H1 (cell line): ENCODE measurements at regions of chrX and their contacts with region 1.

Region 1: GRCh38 chrX:19334945-19335626 is 8.6 kb upstream of the PDHA1 start:
- DNase-seq: no peak
- H3K4me3 ChIP-seq: no peak overlapping the region
- H3K27ac ChIP-seq: no peak overlapping the region
- H3K4me1 ChIP-seq: no peaks in the 10 kb centered on the region
- H3K27me3 ChIP-seq: no peaks in the 10 kb centered on the region
- CTCF ChIP-seq: peak in 2 of 3 experiments; percentile 78 to 98; a peak in 3 of 4 replicates
- EP300 ChIP-seq: no peak
- POLR2A ChIP-seq: no peak
- RAD21 ChIP-seq: peak; percentile 72 to 73

Region 2: DNA sequence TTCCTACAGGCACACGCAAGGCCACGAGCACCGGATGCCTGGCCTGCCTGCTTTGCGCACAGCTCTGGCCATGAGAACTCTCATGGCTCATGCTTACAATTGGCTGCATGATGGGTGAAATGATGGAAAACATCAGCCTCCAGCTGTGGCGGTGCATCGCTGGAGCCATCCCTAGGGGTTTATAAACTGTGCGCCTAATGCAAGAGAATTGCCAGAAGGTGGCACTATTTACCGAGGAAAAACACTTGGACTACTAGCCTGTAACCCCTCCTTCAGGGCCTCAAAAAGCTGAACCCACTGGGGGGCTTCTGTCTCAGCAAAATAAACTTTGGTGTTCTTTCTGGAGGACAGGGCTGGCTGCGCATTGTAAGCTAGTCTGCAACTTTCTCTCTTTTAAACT is 403.1 kb before region 1 on chrX:
- CTCF ChIA-PET with region 1: interaction called, 11 read pairs
- POLR2A ChIA-PET with region 1: no interaction called
- DNase-seq: no peak
- H3K4me3 ChIP-seq: no peak overlapping the region
- H3K27ac ChIP-seq: no peak overlapping the region
- H3K4me1 ChIP-seq: no peaks in the 10 kb centered on the region
- H3K27me3 ChIP-seq: no peaks in the 10 kb centered on the region
- CTCF ChIP-seq: peak in 2 of 3 experiments; percentile 57 to 63; a peak in 3 of 4 replicates
- EP300 ChIP-seq: no peak
- POLR2A ChIP-seq: no peak
- RAD21 ChIP-seq: peak; percentile 63 to 75

Region 3: DNA sequence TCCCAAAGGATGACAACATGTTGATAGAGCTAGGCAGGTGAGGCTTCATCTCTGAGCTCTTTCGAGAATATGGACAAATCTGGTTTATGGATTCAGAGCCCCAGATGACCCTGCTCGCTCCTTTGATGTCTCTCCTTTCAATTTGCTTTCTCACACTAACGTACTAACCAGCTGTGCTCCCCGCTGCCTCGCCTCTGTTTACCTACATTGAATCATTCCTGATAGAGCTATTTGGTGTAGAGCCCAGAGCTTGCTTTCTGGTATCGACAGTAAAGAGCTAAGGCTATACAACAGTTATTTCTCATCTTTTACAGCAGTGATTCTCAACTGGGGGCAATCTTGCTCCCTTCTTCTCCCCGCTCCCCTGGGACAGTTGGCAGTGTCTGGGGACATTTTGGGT is 342.3 kb before region 1 on chrX:
- CTCF ChIA-PET with region 1: interaction called, 12 read pairs
- POLR2A ChIA-PET with region 1: no interaction called
- DNase-seq: no peak
- H3K4me3 ChIP-seq: no peak overlapping the region
- H3K27ac ChIP-seq: no peak overlapping the region
- H3K4me1 ChIP-seq: peaks cover 0 to 3% (median 0%) of the 10 kb centered on the region in 4 experiments; a peak in 1 of 7 replicates
- H3K27me3 ChIP-seq: no peaks in the 10 kb centered on the region
- CTCF ChIP-seq: no peak
- EP300 ChIP-seq: no peak
- POLR2A ChIP-seq: no peak
- RAD21 ChIP-seq: no peak

Region 4: GRCh38 chrX:19017271-19017670 is 317.8 kb before region 1 on chrX:
- CTCF ChIA-PET with region 1: interaction called, 67 read pairs
- POLR2A ChIA-PET with region 1: interaction called, 4 read pairs
- DNase-seq: no peak
- H3K4me3 ChIP-seq: no peak overlapping the region
- H3K27ac ChIP-seq: no peak overlapping the region
- H3K4me1 ChIP-seq: no peaks in the 10 kb centered on the region
- H3K27me3 ChIP-seq: no peaks in the 10 kb centered on the region
- CTCF ChIP-seq: peak; percentile 34 to 79 (median 72)
- EP300 ChIP-seq: no peak
- POLR2A ChIP-seq: no peak
- RAD21 ChIP-seq: peak; percentile 80 to 83

Region 5: DNA sequence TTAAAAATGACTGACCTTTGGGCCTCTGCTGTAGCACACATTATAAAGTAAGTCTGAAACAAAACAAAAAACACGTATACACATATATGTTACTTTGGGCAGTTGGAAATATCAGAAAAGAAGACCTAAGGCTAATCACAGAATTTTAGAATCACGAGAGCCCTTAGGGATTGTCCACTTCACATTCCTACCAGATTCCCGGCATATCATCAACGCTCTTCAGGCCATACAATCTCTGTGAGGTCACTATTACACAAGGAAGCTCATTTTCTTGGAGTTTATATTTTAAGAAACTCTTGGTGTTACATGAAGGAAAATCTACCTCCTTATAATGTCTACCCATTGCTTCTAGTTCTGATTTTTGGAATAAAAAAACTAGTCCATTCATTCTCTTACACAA is 311.7 kb before region 1 on chrX:
- CTCF ChIA-PET with region 1: interaction called, 67 read pairs
- POLR2A ChIA-PET with region 1: no interaction called
- DNase-seq: no peak
- H3K4me3 ChIP-seq: no peak overlapping the region
- H3K27ac ChIP-seq: no peak overlapping the region
- H3K4me1 ChIP-seq: no peaks in the 10 kb centered on the region
- H3K27me3 ChIP-seq: no peaks in the 10 kb centered on the region
- CTCF ChIP-seq: no peak
- EP300 ChIP-seq: no peak
- POLR2A ChIP-seq: no peak
- RAD21 ChIP-seq: no peak

Region 6: DNA sequence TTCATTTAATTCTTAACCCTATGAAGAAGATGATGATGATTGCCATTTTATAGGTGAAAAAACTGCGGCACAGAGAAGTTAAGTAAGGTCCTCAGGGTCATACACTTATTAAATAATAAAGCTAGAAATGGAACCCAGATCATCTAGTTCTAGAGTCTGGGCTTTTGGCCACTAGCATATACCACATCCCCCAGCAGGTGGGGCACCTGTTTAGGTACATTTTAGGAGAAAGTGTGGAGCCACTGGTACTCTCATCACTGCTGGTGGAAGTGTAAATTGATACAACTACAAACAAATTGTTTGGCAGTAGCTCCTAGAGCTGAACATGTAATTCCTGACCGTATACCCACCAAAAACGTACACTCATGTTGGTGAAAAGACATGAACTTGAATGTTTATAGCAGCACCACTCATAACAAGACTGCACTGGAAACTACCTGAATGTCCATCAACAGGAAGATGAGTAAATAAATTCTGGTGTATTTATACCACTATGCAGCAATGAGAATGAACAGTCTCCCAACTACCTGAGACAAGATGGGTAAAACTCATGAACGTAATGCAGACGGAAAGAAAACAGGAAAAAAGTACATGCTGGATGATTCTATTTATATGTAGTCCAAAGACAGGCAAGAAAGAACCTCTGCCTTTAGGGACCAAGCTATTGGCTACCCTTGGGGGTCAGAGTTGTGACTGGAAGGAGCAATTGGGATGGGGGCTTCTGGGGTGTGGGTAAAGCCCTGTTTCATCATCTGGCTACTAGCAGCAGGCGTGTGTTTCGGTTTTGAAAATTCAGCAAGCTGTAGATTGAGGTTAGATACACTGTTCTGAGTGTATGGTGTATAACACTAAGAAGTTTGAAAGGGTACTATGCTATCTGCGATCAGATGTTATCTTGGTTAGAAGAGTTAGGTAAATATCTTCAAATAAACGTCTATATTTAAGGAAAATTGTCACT is 140.5 kb before region 1 on chrX:
- CTCF ChIA-PET with region 1: interaction called, 16 read pairs
- POLR2A ChIA-PET with region 1: no interaction called
- DNase-seq: no peak
- H3K4me3 ChIP-seq: no peak overlapping the region
- H3K27ac ChIP-seq: no peak overlapping the region
- H3K4me1 ChIP-seq: no peaks in the 10 kb centered on the region; a peak in 1 of 7 replicates
- H3K27me3 ChIP-seq: no peaks in the 10 kb centered on the region
- CTCF ChIP-seq: no peak
- EP300 ChIP-seq: no peak
- POLR2A ChIP-seq: no peak
- RAD21 ChIP-seq: no peak; a peak in 1 of 4 replicates